GM12878 (cell line): ENCODE measurements at regions of chr2 and their contacts with region 1.

Region 1: DNA sequence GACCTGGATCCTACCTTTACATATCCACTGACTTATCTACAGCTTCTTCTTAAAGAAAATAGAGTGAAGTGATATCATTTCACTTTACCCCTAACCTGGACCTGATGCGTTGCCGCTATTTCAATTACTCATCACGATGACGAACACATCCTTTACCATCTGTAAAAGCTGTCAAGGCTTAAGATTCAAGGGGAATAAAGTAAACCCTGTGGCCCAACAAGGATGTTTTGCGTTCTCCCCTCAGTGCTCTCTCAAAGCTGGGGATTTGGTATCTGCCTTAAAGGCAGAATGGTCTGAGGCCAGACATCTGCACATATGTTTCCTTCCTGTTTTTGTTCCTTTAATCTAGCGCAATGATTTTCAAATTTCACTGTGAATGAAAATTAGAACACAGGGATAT is 100.1 kb upstream of the KLF7 start:
- DNase-seq: no peak
- ATAC-seq: no peak
- H3K4me3 ChIP-seq: no peak overlapping the region
- H3K27ac ChIP-seq: no peak overlapping the region
- H3K4me1 ChIP-seq: no peaks in the 10 kb centered on the region
- H3K27me3 ChIP-seq: no peaks in the 10 kb centered on the region
- CTCF ChIP-seq: no peak
- EP300 ChIP-seq: no peak
- POLR2A ChIP-seq: no peak
- RAD21 ChIP-seq: no peak

Region 2: GRCh38 chr2:207283356-207283755 is 17.5 kb after region 1 on chr2:
- CTCF ChIA-PET with region 1: interaction called, 3 read pairs
- POLR2A ChIA-PET with region 1: interaction called, 3 read pairs
- RAD21 ChIA-PET with region 1: no interaction called
- SMC1A ChIA-PET with region 1: interaction called, 11 read pairs
- in situ Hi-C with region 1: no loop called
- intact Hi-C with region 1: no loop called
- DNase-seq: no peak
- ATAC-seq: peak; percentile 57
- H3K4me3 ChIP-seq: no peak overlapping the region
- H3K27ac ChIP-seq: peak overlapping the region; percentile 36; the same call in 1 of the 2 replicates
- H3K4me1 ChIP-seq: peaks cover 27% of the 10 kb centered on the region
- H3K27me3 ChIP-seq: no peaks in the 10 kb centered on the region
- CTCF ChIP-seq: peak in 1 of 3 experiments; percentile 2; a peak in 1 of 6 replicates
- EP300 ChIP-seq: no peak
- POLR2A ChIP-seq: no peak
- RAD21 ChIP-seq: 0 out of 2 replicates have a peak, but pooled peaks have one; percentile 25